Common myeloid progenitor, CD34-positive (primary cell): ENCODE measurements at regions of chr16 and their contacts with region 1.

Region 1: GRCh38 chr16:67159593-67160406 is at the starts of genes FBXL8 and TRADD:
- DNase-seq: peak; percentile 71 to 84 (median 76)
- H3K4me3 ChIP-seq: peak within 1 kb of the TSS; percentile 74 to 92 (median 84)
- H3K27ac ChIP-seq: peak within 1 kb of the TSS in 1 of 2 experiments; percentile 64
- H3K4me1 ChIP-seq: peaks cover 3 to 63% (median 56%) of the 10 kb centered on the region in 4 experiments
- H3K27me3 ChIP-seq: peaks cover 6 to 51% (median 15%) of the 10 kb centered on the region in 5 experiments

Region 2: DNA sequence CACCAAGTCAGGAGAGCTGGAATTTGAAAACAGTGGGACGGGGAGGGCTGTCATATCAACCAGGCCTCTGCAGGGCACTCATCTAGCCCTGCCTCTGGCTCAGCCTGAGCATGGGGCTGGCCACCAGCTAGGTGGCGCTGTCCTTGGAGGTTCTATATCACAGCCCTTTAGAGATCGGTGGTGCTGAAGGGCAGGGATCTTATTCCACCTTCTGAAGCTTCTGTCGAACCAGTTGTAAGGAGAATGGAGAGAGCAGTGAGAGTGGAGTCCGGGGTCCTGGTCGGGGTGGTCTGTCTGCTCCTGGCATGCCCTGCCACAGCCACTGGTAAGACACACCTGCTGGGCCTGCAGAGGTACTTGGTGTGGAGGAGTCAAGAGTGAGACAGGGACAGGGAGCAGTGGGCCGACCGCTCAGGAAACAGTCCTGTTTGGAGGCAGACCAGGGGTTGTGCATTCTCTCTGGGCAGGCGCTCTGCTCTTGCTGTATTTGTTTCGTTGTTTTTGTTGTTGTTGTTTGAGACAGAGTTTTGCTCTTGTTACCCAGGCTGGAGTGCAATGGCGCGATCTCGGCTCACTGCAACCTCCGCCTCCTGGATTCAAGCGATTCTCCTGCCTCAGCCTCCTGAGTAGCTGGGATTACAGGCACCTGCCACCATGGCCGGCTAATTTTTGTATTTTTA is 198.6 kb before region 1 on chr16 and contains the start of gene CES3:
- CTCF ChIA-PET with region 1: interaction called, 16 read pairs
- POLR2A ChIA-PET with region 1: no interaction called
- DNase-seq: peak; percentile 66 to 84 (median 83)
- H3K4me3 ChIP-seq: peak within 1 kb of the TSS in 2 of 7 experiments; percentile 19 to 55
- H3K27ac ChIP-seq: no peak within 1 kb of the TSS
- H3K4me1 ChIP-seq: peaks cover 0 to 18% (median 13%) of the 10 kb centered on the region in 4 experiments
- H3K27me3 ChIP-seq: no peaks in the 10 kb centered on the region

Region 3: GRCh38 chr16:67017810-67018488 is 141.9 kb before region 1 on chr16:
- CTCF ChIA-PET with region 1: interaction called, 65 read pairs
- POLR2A ChIA-PET with region 1: interaction called, 3 read pairs
- DNase-seq: peak; percentile 94 to 96 (median 96)
- H3K4me3 ChIP-seq: no peak overlapping the region
- H3K27ac ChIP-seq: no peak overlapping the region
- H3K4me1 ChIP-seq: peaks cover 0 to 18% (median 15%) of the 10 kb centered on the region in 4 experiments
- H3K27me3 ChIP-seq: peaks cover 0 to 15% (median 12%) of the 10 kb centered on the region in 5 experiments

Region 4: GRCh38 chr16:67129422-67129821 is 30.4 kb before region 1 on chr16:
- CTCF ChIA-PET with region 1: interaction called, 37 read pairs
- POLR2A ChIA-PET with region 1: no interaction called
- DNase-seq: no peak
- H3K4me3 ChIP-seq: no peak overlapping the region
- H3K27ac ChIP-seq: no peak overlapping the region
- H3K4me1 ChIP-seq: no peaks in the 10 kb centered on the region
- H3K27me3 ChIP-seq: no peaks in the 10 kb centered on the region

Region 5: GRCh38 chr16:67144943-67145342 is 14.9 kb before region 1 on chr16:
- CTCF ChIA-PET with region 1: interaction called, 13 read pairs
- POLR2A ChIA-PET with region 1: interaction called, 4 read pairs
- DNase-seq: no peak
- H3K4me3 ChIP-seq: no peak overlapping the region
- H3K27ac ChIP-seq: no peak overlapping the region
- H3K4me1 ChIP-seq: peaks cover 0 to 2% (median 0%) of the 10 kb centered on the region in 4 experiments
- H3K27me3 ChIP-seq: peaks cover 0 to 13% (median 0%) of the 10 kb centered on the region in 5 experiments